Posterior vena cava (tissue), 2 donors: ENCODE measurements at regions of chr2 and their contacts with region 1.

Region 1: DNA sequence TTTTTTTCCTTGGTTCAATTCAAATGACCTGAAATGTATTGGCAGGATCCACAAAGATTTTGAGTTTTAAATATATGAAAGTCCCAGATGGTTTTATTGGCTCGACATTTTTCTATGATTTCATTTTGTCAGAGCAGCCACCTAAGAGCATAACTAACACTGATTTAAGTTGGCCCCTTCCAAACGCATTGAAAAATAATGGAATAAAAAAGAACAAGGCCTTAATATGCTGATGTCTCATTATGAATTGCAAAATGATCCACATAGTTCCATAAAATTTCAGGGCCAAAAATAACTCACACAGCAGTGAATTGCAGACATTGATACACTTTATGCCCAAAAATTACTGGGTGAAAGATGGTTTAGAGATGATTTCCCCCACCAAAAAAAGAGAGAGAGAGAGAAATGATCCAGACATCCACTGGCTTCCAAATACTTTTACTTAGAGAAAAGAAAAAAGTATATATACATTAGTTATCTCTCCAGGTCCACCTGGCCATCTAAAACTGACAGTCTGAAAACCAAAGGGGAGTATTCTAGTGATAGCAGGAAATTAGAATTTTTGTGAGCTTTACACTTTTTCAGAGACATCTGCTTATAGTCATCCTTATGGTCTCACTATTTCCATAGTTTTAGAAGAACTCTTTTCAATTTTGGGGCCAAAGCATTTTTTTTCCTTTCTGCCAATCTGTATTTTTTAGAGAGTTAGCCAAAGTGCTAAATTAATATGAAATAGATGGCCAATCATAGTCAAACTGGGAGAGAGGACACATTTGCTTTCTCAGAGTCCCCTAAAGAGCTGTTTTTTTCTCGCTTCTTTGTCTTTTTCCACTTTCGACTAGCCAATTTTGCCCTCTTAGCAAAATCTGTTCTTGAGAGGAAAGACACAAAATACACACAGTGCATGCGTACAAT is 213.5 kb upstream of the RND3 start:
- DNase-seq: no peak

Region 2: GRCh38 chr2:150716186-150716585 is 15.3 kb after region 1 on chr2:
- intact Hi-C with region 1: no loop called
- DNase-seq: no peak

Region 3: GRCh38 chr2:150735894-150736498 is 35.1 kb after region 1 on chr2:
- intact Hi-C with region 1: loop called in 1 of 2 experiments (anchors 1 kb)
- DNase-seq: no peak

Region 4: GRCh38 chr2:150789376-150789905 is 88.5 kb after region 1 on chr2:
- intact Hi-C with region 1: no loop called
- DNase-seq: no peak